ENCODE measurements at regions of chr12 and their contacts with region 1.

Region 1: GRCh38 chr12:109713187-109713984 is at the start of gene FAM222A:
- DNase-seq: peak; percentile 97 to 98 (median 98)
- H3K4me3 ChIP-seq: peak within 1 kb of the TSS in 1 of 2 donors; percentile 60
- H3K4me3 Mint-ChIP-seq: peak within 1 kb of the TSS; percentile 27 to 84 (median 72)
- H3K27ac ChIP-seq: peak within 1 kb of the TSS; percentile 30
- H3K27ac Mint-ChIP-seq: peak within 1 kb of the TSS in 4 of 7 donors; percentile 6 to 66 (median 43)
- H3K4me1 ChIP-seq: peaks cover 12% of the 10 kb centered on the region
- H3K4me1 Mint-ChIP-seq: peaks cover 0 to 6% (median 1%) of the 10 kb centered on the region in 4 donors
- H3K27me3 ChIP-seq: peaks cover 18% of the 10 kb centered on the region
- H3K27me3 Mint-ChIP-seq: peaks cover 13 to 18% of the 10 kb centered on the region in 2 donors
- total RNA-seq, gene FAM222A: 0.55 to 0.69 TPM

Region 2: GRCh38 chr12:109477185-109477962 is 236.0 kb before region 1 on chr12 and contains the starts of genes KCTD10 and UBE3B:
- CTCF ChIA-PET with region 1: no interaction called
- POLR2A ChIA-PET with region 1: interaction called, 7 read pairs
- intact Hi-C with region 1: loop called (anchors 5 kb)
- DNase-seq: peak; percentile 85 to 89 (median 87)
- H3K4me3 ChIP-seq: peak within 1 kb of the TSS; percentile 93 to 97
- H3K4me3 Mint-ChIP-seq: peak within 1 kb of the TSS; percentile 97 to 99 (median 97)
- H3K27ac ChIP-seq: peak within 1 kb of the TSS; percentile 87
- H3K27ac Mint-ChIP-seq: peak within 1 kb of the TSS; percentile 98 to 100 (median 99)
- H3K4me1 ChIP-seq: peaks cover 38% of the 10 kb centered on the region
- H3K4me1 Mint-ChIP-seq: peaks cover 31 to 67% (median 37%) of the 10 kb centered on the region in 4 donors
- H3K27me3 ChIP-seq: no peaks in the 10 kb centered on the region
- H3K27me3 Mint-ChIP-seq: no peaks in the 10 kb centered on the region
- total RNA-seq, gene KCTD10: 29.2 to 31.9 TPM
- total RNA-seq, gene UBE3B: 55.8 to 58.1 TPM

Region 3: GRCh38 chr12:110403146-110403975 is 690.0 kb after region 1 on chr12 and contains the start of gene ANAPC7:
- CTCF ChIA-PET with region 1: no interaction called
- POLR2A ChIA-PET with region 1: no interaction called
- intact Hi-C with region 1: loop called (anchors 5 kb)
- DNase-seq: peak; percentile 88 to 90 (median 89)
- H3K4me3 ChIP-seq: peak within 1 kb of the TSS; percentile 80 to 93
- H3K4me3 Mint-ChIP-seq: peak within 1 kb of the TSS; percentile 98 to 100 (median 100)
- H3K27ac ChIP-seq: peak within 1 kb of the TSS; percentile 82
- H3K27ac Mint-ChIP-seq: peak within 1 kb of the TSS in 6 of 7 donors; percentile 98 to 99 (median 99)
- H3K4me1 ChIP-seq: peaks cover 32% of the 10 kb centered on the region
- H3K4me1 Mint-ChIP-seq: peaks cover 18 to 44% (median 30%) of the 10 kb centered on the region in 4 donors
- H3K27me3 ChIP-seq: no peaks in the 10 kb centered on the region
- H3K27me3 Mint-ChIP-seq: no peaks in the 10 kb centered on the region
- total RNA-seq, gene ANAPC7: 69.9 to 70.1 TPM

Measured in CD4-positive, alpha-beta memory T cell (primary cell).